RWPE1 (cell line): ENCODE measurements at regions of chr1 and their contacts with region 1.

Region 1: DNA sequence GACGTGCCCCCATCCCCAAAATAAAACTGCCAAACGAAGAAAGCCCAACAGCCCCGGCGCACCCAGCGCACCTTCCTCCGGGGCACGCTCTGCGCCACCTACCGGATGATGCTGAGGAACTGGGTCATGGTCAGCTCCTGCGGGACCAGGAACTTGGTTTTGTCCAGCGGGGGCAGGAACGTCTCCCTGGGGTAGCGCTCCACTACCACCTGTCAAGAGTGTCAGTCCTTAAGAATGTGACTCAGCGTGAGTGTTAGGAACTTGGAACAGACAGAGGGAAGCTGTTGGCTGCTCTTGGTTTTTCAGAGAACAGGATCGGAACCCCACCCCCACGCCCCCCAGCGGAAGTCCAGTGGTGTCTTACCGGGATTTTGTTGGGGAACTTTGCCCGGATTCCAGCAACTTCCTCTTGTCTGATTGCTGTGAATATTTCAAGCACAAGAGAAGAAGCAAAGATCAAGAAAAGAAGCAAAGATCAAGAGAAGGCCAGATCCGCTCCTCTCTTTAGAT is 431 bp downstream of the MAP1LC3C start:
- DNase-seq: peak; percentile 78
- H3K27ac ChIP-seq: no peak overlapping the region
- CTCF ChIP-seq: peak; percentile 67

Region 2: GRCh38 chr1:240611619-240612480 is 1386.6 kb before region 1 on chr1 and contains the start of gene GREM2:
- CTCF ChIA-PET with region 1: no interaction called
- POLR2A ChIA-PET with region 1: interaction called, 10 read pairs
- DNase-seq: peak; percentile 25
- H3K27ac ChIP-seq: no peak within 1 kb of the TSS
- CTCF ChIP-seq: no peak

Region 3: DNA sequence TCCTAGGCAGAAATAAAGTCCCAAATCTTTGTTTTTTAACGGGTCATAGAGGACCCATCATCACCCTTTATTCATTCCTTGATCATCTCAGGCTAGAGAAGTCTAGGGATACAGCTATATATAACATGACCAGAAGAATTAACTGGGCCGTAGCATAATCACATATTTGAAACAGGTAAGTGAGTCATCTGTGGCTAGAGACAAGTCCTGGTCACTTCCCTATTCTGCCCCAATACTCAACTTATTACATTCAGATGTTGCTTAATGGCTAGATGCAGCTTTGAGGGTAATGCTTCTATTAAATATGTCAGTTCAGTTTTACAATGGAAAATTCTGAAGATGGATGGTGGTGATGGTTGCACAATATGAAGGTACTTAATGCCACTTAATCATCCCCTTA is 103.5 kb before region 1 on chr1:
- CTCF ChIA-PET with region 1: interaction called, 34 read pairs
- POLR2A ChIA-PET with region 1: no interaction called
- DNase-seq: peak; percentile 8
- H3K27ac ChIP-seq: no peak overlapping the region
- CTCF ChIP-seq: no peak